ENCODE measurements at regions of chr11 and their contacts with region 1.

Region 1: DNA sequence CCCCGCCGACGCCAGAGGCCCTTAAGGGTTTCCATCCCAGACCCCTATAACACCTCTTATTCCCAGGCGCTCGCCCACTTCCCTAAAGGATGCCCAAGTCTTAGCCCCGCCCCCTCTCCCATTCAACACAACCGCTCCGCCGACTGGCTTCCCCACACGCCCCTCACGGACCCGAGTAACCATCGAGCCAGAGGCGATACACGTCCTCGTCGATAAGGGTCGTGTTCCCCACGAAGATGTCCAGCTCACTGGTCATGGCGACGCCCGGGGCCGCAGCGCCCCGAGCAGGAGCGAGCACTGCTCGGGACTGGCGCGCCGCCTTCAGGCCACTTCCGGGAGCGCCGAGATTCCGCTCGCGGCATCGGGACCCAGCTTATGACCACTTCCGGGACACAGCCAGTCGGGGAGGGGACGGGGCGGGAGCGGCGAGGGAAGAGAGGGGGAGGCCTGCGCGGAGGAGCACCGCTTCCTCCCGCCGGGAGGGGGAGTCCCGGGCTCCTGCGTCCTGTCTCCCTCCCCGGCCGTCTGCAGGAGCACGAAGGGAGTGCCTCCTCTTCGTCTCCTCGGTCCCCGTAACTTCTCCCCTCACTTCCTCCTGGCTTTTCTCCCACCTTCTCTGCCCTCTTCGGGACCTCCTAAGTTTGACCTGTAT is at the start of gene FIBP:
- DNase-seq: peak; percentile 96
- ATAC-seq: peak; percentile 64
- H3K4me3 ChIP-seq: peak within 1 kb of the TSS; percentile 63 to 88 (median 75)
- H3K4me3 Mint-ChIP-seq: peak within 1 kb of the TSS; percentile 98
- H3K27ac ChIP-seq: peak within 1 kb of the TSS; percentile 85
- H3K27ac Mint-ChIP-seq: peak within 1 kb of the TSS; percentile 98
- H3K4me1 ChIP-seq: peaks cover 47 to 63% of the 10 kb centered on the region in 2 donors
- H3K4me1 Mint-ChIP-seq: peaks cover 66% of the 10 kb centered on the region
- H3K27me3 ChIP-seq: no peaks in the 10 kb centered on the region
- H3K27me3 Mint-ChIP-seq: no peaks in the 10 kb centered on the region
- CTCF ChIP-seq: peak; percentile 86
- total RNA-seq, gene FIBP: 59.8 and 63.4 TPM in 2 replicates

Region 2: GRCh38 chr11:65301491-65302329 is 586.6 kb before region 1 on chr11:
- CTCF ChIA-PET with region 1: no interaction called
- POLR2A ChIA-PET with region 1: no interaction called
- intact Hi-C with region 1: no loop called
- DNase-seq: no peak
- ATAC-seq: no peak
- H3K4me3 ChIP-seq: no peak overlapping the region
- H3K4me3 Mint-ChIP-seq: no peak overlapping the region
- H3K27ac ChIP-seq: no peak overlapping the region
- H3K27ac Mint-ChIP-seq: no peak overlapping the region
- H3K4me1 ChIP-seq: no peaks in the 10 kb centered on the region
- H3K4me1 Mint-ChIP-seq: no peaks in the 10 kb centered on the region
- H3K27me3 ChIP-seq: no peaks in the 10 kb centered on the region
- H3K27me3 Mint-ChIP-seq: no peaks in the 10 kb centered on the region
- CTCF ChIP-seq: no peak

Region 3: DNA sequence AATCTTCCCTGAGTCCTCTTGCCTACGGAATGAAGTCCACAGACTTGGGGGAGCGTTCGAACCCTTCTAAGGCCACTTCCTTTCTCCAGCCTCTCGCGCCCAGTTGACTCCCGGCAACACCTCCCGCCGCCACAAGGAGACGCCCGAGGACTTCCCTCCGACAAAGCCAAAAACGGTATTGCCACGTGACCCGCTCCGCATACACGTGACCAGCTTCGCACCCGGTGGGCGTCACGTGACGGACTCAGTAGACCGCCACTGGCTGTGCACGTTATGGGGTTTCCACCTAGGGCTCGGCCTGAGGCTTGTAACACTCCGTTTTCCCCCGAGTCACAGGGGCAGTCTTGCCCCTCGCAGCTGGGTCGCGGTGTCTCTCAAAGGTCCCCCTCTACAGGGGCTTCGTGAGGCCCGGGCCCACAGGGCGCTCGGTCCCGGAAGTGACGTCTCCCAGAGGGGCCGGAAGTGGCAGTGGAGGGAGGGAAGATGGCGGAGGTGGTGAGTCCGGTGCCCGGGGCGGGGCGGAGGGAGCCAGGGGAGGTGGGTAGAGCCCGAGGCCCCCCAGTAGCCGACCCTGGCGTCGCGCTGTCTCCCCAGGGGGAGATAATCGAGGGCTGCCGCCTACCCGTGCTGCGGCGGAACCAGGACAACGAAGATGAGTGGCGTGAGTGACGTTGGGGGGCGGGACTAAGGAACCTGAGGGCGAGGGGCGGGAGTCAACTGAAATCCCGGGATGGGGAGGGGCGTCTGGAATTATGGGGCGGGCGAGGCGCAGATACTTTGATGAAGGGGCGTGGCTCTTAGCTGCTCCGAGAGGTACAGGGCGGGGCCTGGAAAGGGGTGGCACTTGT is 176.3 kb before region 1 on chr11 and contains the start of gene KAT5:
- CTCF ChIA-PET with region 1: interaction called, 28 read pairs
- POLR2A ChIA-PET with region 1: interaction called, 9 read pairs
- intact Hi-C with region 1: loop called (anchors 1 kb)
- DNase-seq: peak; percentile 100
- ATAC-seq: peak; percentile 82
- H3K4me3 ChIP-seq: peak within 1 kb of the TSS; percentile 41 to 94 (median 84)
- H3K4me3 Mint-ChIP-seq: peak within 1 kb of the TSS; percentile 92
- H3K27ac ChIP-seq: peak within 1 kb of the TSS; percentile 98 to 99
- H3K27ac Mint-ChIP-seq: peak within 1 kb of the TSS; percentile 99
- H3K4me1 ChIP-seq: peaks cover 10 to 17% of the 10 kb centered on the region in 2 donors
- H3K4me1 Mint-ChIP-seq: peaks cover 27% of the 10 kb centered on the region
- H3K27me3 ChIP-seq: no peaks in the 10 kb centered on the region
- H3K27me3 Mint-ChIP-seq: no peaks in the 10 kb centered on the region
- CTCF ChIP-seq: peak; percentile 98
- total RNA-seq, gene KAT5: 134 and 142 TPM in 2 replicates

Region 4: GRCh38 chr11:65767406-65767805 is 120.9 kb before region 1 on chr11:
- CTCF ChIA-PET with region 1: no interaction called
- POLR2A ChIA-PET with region 1: no interaction called
- intact Hi-C with region 1: no loop called
- DNase-seq: no peak
- ATAC-seq: no peak
- H3K4me3 ChIP-seq: no peak overlapping the region
- H3K4me3 Mint-ChIP-seq: no peak overlapping the region
- H3K27ac ChIP-seq: no peak overlapping the region
- H3K27ac Mint-ChIP-seq: no peak overlapping the region
- H3K4me1 ChIP-seq: peaks cover 0 to 4% of the 10 kb centered on the region in 2 donors
- H3K4me1 Mint-ChIP-seq: peaks cover 3% of the 10 kb centered on the region
- H3K27me3 ChIP-seq: no peaks in the 10 kb centered on the region
- H3K27me3 Mint-ChIP-seq: no peaks in the 10 kb centered on the region
- CTCF ChIP-seq: no peak

Region 5: GRCh38 chr11:65817835-65818742 is 70.2 kb before region 1 on chr11:
- CTCF ChIA-PET with region 1: interaction called, 14 read pairs
- POLR2A ChIA-PET with region 1: interaction called, 5 read pairs
- intact Hi-C with region 1: no loop called
- DNase-seq: peak; percentile 95
- ATAC-seq: peak; percentile 98
- H3K4me3 ChIP-seq: peak overlapping the region; percentile 43 to 66 (median 52)
- H3K4me3 Mint-ChIP-seq: peak overlapping the region; percentile 74
- H3K27ac ChIP-seq: peak overlapping the region; percentile 54 to 66
- H3K27ac Mint-ChIP-seq: peak overlapping the region; percentile 75
- H3K4me1 ChIP-seq: peaks cover 6 to 13% of the 10 kb centered on the region in 2 donors
- H3K4me1 Mint-ChIP-seq: peaks cover 9% of the 10 kb centered on the region
- H3K27me3 ChIP-seq: no peaks in the 10 kb centered on the region
- H3K27me3 Mint-ChIP-seq: no peaks in the 10 kb centered on the region
- CTCF ChIP-seq: peak; percentile 100

Region 6: DNA sequence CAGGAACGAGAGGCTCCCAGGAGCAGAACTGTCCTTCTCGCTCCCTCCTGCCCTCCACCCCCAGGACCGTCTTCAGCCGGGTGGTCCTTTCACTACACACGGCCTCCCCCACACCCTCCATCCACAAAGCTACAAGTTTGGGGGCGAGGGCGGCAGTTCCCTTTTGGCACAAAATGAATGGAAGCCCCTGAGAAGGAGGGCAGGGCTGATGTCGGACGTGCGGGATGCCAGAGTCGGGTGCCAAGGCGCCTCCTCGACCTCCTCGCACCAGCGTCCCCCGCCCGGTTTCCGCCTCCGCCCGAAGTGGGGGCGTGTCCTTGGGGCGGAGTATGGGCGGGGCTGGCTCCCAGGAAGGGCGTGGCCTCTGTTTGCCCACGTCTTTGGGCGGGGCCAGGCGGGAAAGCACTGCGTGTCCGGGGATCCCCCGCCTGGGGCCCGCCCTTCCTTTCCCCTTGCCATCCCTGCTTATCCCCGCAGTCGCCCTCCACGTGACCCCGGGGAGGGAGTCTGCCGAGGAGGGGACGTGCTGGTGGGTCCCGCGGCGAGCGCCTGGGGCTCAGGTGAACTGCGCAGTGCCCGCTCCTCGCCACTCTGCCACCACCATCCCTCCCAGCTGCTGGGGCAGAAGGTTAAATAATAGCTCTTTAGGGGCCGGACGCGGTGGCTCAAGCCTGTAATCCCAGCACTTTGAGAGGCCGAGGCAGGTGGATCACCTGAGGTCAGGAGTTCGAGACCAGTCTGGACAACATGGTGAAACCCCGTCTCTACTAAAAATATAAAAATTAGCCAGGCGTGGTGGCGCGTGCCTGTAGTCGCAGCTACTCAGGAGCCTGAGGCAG is 14.8 kb before region 1 on chr11:
- CTCF ChIA-PET with region 1: interaction called, 66 read pairs
- POLR2A ChIA-PET with region 1: interaction called, 24 read pairs
- intact Hi-C with region 1: loop called (anchors 2 kb)
- DNase-seq: peak; percentile 97
- ATAC-seq: peak; percentile 98
- H3K4me3 ChIP-seq: peak overlapping the region; percentile 52 to 79 (median 63)
- H3K4me3 Mint-ChIP-seq: peak overlapping the region; percentile 92
- H3K27ac ChIP-seq: peak overlapping the region; percentile 81 to 91
- H3K27ac Mint-ChIP-seq: peak overlapping the region; percentile 91
- H3K4me1 ChIP-seq: peaks cover 10 to 29% of the 10 kb centered on the region in 2 donors
- H3K4me1 Mint-ChIP-seq: peaks cover 26% of the 10 kb centered on the region
- H3K27me3 ChIP-seq: no peaks in the 10 kb centered on the region
- H3K27me3 Mint-ChIP-seq: peaks cover 5% of the 10 kb centered on the region
- CTCF ChIP-seq: no peak

Region 7: GRCh38 chr11:65927904-65928397 is 39.7 kb after region 1 on chr11:
- CTCF ChIA-PET with region 1: interaction called, 18 read pairs
- POLR2A ChIA-PET with region 1: interaction called, 9 read pairs
- intact Hi-C with region 1: loop called (anchors 2 kb)
- DNase-seq: peak; percentile 89
- ATAC-seq: peak; percentile 94
- H3K4me3 ChIP-seq: peak overlapping the region in 4 of 5 experiments; percentile 27 to 67 (median 38)
- H3K4me3 Mint-ChIP-seq: peak overlapping the region; percentile 74
- H3K27ac ChIP-seq: peak overlapping the region; percentile 70 to 79
- H3K27ac Mint-ChIP-seq: peak overlapping the region; percentile 98
- H3K4me1 ChIP-seq: peaks cover 20 to 22% of the 10 kb centered on the region in 2 donors
- H3K4me1 Mint-ChIP-seq: peaks cover 18% of the 10 kb centered on the region
- H3K27me3 ChIP-seq: no peaks in the 10 kb centered on the region
- H3K27me3 Mint-ChIP-seq: no peaks in the 10 kb centered on the region
- CTCF ChIP-seq: no peak

Region 8: GRCh38 chr11:65972116-65972515 is 83.8 kb after region 1 on chr11:
- CTCF ChIA-PET with region 1: interaction called, 11 read pairs
- POLR2A ChIA-PET with region 1: no interaction called
- intact Hi-C with region 1: no loop called
- DNase-seq: no peak
- ATAC-seq: no peak
- H3K4me3 ChIP-seq: no peak overlapping the region
- H3K4me3 Mint-ChIP-seq: no peak overlapping the region
- H3K27ac ChIP-seq: no peak overlapping the region
- H3K27ac Mint-ChIP-seq: no peak overlapping the region
- H3K4me1 ChIP-seq: no peaks in the 10 kb centered on the region
- H3K4me1 Mint-ChIP-seq: peaks cover 2% of the 10 kb centered on the region
- H3K27me3 ChIP-seq: no peaks in the 10 kb centered on the region
- H3K27me3 Mint-ChIP-seq: no peaks in the 10 kb centered on the region
- CTCF ChIP-seq: no peak

Region 9: DNA sequence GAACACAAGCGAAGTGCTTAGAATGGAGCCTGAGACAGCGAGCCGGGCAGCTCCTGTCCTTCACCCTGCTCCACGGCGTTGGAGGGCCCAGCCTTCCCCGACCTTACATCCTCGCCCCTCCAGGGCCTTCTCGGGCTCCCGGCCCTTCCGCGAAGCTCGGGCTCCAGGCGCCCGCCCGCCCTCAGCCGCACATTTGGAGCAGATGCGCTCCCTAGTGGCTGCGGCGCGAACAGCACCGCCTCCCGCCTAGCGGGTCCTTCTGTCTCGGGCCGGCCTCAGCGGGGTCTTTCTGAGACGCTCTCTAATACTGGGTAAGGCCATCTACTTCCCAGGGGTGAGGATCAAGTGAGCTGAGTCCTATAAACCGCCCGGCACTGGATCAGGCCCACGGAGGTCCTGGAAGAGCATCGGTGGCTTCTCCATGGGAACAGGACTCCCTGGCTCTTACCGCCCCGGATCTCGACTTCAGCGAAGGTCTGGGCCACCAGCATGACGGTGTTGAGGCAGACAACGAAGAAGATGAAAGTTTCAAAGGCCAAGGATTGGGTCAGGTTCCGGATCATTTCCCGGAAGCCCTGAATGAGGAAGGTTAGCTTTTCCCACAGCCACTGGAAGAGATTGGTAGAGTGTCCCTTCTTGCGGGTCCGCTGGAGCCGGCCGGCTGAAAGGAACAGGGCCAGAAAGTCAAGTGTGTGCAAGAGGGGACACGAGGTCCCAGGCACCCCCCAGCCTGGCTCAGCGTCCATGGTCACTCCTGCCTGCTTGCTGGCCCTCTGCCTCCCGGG is 134.3 kb after region 1 on chr11:
- CTCF ChIA-PET with region 1: interaction called, 13 read pairs
- POLR2A ChIA-PET with region 1: interaction called, 10 read pairs
- intact Hi-C with region 1: no loop called
- DNase-seq: peak; percentile 85
- ATAC-seq: peak; percentile 99
- H3K4me3 ChIP-seq: no peak overlapping the region
- H3K4me3 Mint-ChIP-seq: no peak overlapping the region
- H3K27ac ChIP-seq: no peak overlapping the region
- H3K27ac Mint-ChIP-seq: no peak overlapping the region
- H3K4me1 ChIP-seq: peaks cover 7% of the 10 kb centered on the region in 2 donors
- H3K4me1 Mint-ChIP-seq: peaks cover 5% of the 10 kb centered on the region
- H3K27me3 ChIP-seq: peaks cover 0 to 9% (median 4%) of the 10 kb centered on the region in 4 experiments
- H3K27me3 Mint-ChIP-seq: peaks cover 7% of the 10 kb centered on the region
- CTCF ChIP-seq: peak; percentile 93

Region 10: GRCh38 chr11:66388756-66389386 is 500.6 kb after region 1 on chr11:
- CTCF ChIA-PET with region 1: no interaction called
- POLR2A ChIA-PET with region 1: no interaction called
- intact Hi-C with region 1: no loop called
- DNase-seq: peak; percentile 79
- ATAC-seq: peak; percentile 58
- H3K4me3 ChIP-seq: no peak overlapping the region
- H3K4me3 Mint-ChIP-seq: no peak overlapping the region
- H3K27ac ChIP-seq: no peak overlapping the region
- H3K27ac Mint-ChIP-seq: no peak overlapping the region
- H3K4me1 ChIP-seq: peaks cover 7 to 12% of the 10 kb centered on the region in 2 donors
- H3K4me1 Mint-ChIP-seq: peaks cover 12% of the 10 kb centered on the region
- H3K27me3 ChIP-seq: no peaks in the 10 kb centered on the region
- H3K27me3 Mint-ChIP-seq: peaks cover 5% of the 10 kb centered on the region
- CTCF ChIP-seq: peak; percentile 76